IMR-90 (cell line): ENCODE measurements at regions of chr11 and their contacts with region 1.

Region 1: GRCh38 chr11:75142714-75143419 is 8.0 kb upstream of the SLCO2B1 start:
- DNase-seq: peak; percentile 95
- ATAC-seq: peak; percentile 99
- H3K4me3 ChIP-seq: no peak overlapping the region
- H3K27ac ChIP-seq: 0 out of 2 replicates have a peak overlapping the region, but pooled peaks have one; percentile 3
- H3K4me1 ChIP-seq: peaks cover 2% of the 10 kb centered on the region; the same call in 1 of the 2 replicates
- H3K27me3 ChIP-seq: peaks cover 21% of the 10 kb centered on the region
- CTCF ChIP-seq: no peak
- POLR2A ChIP-seq: no peak
- RAD21 ChIP-seq: no peak

Region 2: DNA sequence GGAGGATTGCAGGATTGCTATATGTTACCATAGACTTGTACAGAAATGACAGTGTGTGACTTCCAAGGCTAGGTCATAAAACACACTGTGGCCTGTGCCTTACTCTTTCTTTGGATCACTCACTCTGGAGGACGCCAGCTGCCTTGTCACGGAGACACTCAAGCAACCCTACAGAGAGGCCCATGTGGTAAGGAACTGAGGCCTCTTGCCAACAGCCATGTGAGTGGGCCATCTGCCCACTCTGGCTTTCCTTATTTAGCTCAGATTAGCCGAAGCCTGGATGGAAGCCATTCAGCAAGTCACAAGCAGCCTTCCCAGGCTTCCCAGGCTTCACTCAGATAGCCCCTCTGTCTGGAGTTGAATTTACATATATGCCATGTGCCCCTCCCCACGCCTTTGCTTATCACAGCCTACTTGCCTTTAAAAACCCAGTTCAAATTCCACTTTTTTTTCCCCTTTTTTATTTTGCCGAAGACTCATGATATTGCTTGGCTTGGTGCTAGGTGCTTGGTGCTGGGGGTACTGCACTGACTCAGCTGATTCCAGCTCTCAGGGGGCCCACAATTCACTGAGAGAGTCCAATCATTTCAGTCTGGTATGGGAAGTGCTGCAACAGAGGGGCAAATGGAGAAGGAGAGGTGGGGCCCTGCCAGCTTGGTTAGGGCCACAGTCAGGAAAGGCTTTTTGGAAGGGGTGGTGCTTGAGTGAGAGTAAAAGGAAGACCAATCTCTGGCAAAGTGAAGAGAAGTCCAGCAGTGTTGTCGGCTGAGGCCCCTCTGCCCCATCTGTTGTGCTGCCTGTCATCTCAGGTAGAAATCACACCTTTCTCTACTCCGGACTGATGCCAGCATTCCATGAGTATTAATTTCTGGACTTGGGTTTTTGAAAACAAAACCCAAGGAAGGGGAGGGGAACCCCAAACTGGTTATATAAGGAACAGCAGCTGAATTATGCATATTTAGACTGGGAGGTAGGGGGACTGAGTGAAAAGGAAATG is 816.9 kb before region 1 on chr11:
- CTCF ChIA-PET with region 1: no interaction called
- POLR2A ChIA-PET with region 1: no interaction called
- dilution Hi-C with region 1: no loop called
- in situ Hi-C with region 1: no loop called
- intact Hi-C with region 1: no loop called
- DNase-seq: peak; percentile 94
- ATAC-seq: peak; percentile 68
- H3K4me3 ChIP-seq: no peak overlapping the region
- H3K27ac ChIP-seq: peak overlapping the region; percentile 6; the same call in 1 of the 2 replicates
- H3K4me1 ChIP-seq: peaks cover 20% of the 10 kb centered on the region
- H3K27me3 ChIP-seq: no peaks in the 10 kb centered on the region
- CTCF ChIP-seq: no peak
- POLR2A ChIP-seq: no peak
- RAD21 ChIP-seq: no peak

Region 3: GRCh38 chr11:74602637-74603556 is 540.0 kb before region 1 on chr11:
- CTCF ChIA-PET with region 1: no interaction called
- POLR2A ChIA-PET with region 1: no interaction called
- dilution Hi-C with region 1: no loop called
- in situ Hi-C with region 1: no loop called
- intact Hi-C with region 1: no loop called
- DNase-seq: no peak
- ATAC-seq: no peak
- H3K4me3 ChIP-seq: no peak overlapping the region
- H3K27ac ChIP-seq: no peak overlapping the region
- H3K4me1 ChIP-seq: no peaks in the 10 kb centered on the region
- H3K27me3 ChIP-seq: no peaks in the 10 kb centered on the region
- CTCF ChIP-seq: no peak
- POLR2A ChIP-seq: no peak
- RAD21 ChIP-seq: no peak

Region 4: DNA sequence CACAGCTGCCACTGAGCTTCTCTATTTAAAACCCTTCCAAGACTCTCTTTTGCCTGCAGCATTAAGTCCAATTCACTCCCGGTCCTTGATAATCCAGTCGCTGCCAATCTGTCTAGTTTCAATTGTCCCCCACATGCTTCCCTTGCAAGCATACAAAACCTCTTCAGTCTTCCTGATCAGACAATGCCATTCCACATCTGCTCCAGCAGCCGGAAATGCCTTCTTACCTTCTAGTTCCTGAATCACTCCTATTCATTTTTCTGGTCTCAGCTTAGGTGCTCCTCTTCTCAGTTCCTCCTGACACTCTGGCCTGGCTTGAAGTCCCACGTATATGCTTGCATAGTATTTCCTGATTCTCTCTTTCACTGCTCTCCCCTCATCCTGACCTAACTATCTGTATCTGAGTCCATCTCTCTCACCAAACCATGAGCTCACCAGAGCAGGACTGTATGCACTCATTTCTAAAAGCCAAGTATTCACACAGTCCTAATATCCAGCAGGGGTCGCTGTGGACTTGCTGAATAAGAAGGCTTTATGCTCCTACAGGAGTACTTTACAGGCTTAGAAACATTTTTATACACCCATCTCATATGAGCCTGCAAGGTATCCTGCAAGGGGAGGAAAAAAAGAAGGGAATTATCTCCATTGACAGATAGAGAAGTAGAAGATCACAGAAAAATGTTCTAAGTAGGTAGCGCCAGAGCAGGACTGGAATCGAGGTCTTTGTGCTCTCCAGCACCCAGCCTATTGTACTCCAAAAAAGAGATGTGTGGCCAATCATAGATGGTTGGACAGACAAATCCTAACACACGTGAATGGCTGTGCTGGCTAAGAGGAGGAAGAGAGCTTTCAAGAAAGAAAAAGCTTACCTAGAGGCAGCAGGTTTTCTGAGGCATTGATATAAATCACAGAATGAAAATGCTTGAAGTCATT is 213.2 kb before region 1 on chr11:
- CTCF ChIA-PET with region 1: no interaction called
- POLR2A ChIA-PET with region 1: no interaction called
- dilution Hi-C with region 1: no loop called
- in situ Hi-C with region 1: no loop called
- intact Hi-C with region 1: loop called (anchors 2 kb)
- DNase-seq: peak; percentile 95
- ATAC-seq: peak; percentile 81
- H3K4me3 ChIP-seq: no peak overlapping the region
- H3K27ac ChIP-seq: no peak overlapping the region
- H3K4me1 ChIP-seq: peaks cover 14% of the 10 kb centered on the region
- H3K27me3 ChIP-seq: no peaks in the 10 kb centered on the region
- CTCF ChIP-seq: peak; percentile 93
- POLR2A ChIP-seq: no peak
- RAD21 ChIP-seq: peak; percentile 92

Region 5: GRCh38 chr11:75022759-75023396 is 120.0 kb before region 1 on chr11:
- CTCF ChIA-PET with region 1: interaction called, 9 read pairs
- POLR2A ChIA-PET with region 1: no interaction called
- dilution Hi-C with region 1: no loop called
- in situ Hi-C with region 1: no loop called
- intact Hi-C with region 1: loop called (anchors 2 kb)
- DNase-seq: peak; percentile 84
- ATAC-seq: peak; percentile 99
- H3K4me3 ChIP-seq: no peak overlapping the region
- H3K27ac ChIP-seq: no peak overlapping the region
- H3K4me1 ChIP-seq: no peaks in the 10 kb centered on the region
- H3K27me3 ChIP-seq: peaks cover 3% of the 10 kb centered on the region
- CTCF ChIP-seq: peak; percentile 99
- POLR2A ChIP-seq: no peak
- RAD21 ChIP-seq: peak; percentile 98

Region 6: GRCh38 chr11:75087319-75088305 is 55.3 kb before region 1 on chr11:
- CTCF ChIA-PET with region 1: no interaction called
- POLR2A ChIA-PET with region 1: interaction called, 15 read pairs
- dilution Hi-C with region 1: no loop called
- in situ Hi-C with region 1: no loop called
- intact Hi-C with region 1: no loop called
- DNase-seq: no peak
- ATAC-seq: no peak
- H3K4me3 ChIP-seq: no peak overlapping the region
- H3K27ac ChIP-seq: no peak overlapping the region
- H3K4me1 ChIP-seq: no peaks in the 10 kb centered on the region
- H3K27me3 ChIP-seq: peaks cover 15% of the 10 kb centered on the region
- CTCF ChIP-seq: no peak
- POLR2A ChIP-seq: no peak
- RAD21 ChIP-seq: no peak

Region 7: DNA sequence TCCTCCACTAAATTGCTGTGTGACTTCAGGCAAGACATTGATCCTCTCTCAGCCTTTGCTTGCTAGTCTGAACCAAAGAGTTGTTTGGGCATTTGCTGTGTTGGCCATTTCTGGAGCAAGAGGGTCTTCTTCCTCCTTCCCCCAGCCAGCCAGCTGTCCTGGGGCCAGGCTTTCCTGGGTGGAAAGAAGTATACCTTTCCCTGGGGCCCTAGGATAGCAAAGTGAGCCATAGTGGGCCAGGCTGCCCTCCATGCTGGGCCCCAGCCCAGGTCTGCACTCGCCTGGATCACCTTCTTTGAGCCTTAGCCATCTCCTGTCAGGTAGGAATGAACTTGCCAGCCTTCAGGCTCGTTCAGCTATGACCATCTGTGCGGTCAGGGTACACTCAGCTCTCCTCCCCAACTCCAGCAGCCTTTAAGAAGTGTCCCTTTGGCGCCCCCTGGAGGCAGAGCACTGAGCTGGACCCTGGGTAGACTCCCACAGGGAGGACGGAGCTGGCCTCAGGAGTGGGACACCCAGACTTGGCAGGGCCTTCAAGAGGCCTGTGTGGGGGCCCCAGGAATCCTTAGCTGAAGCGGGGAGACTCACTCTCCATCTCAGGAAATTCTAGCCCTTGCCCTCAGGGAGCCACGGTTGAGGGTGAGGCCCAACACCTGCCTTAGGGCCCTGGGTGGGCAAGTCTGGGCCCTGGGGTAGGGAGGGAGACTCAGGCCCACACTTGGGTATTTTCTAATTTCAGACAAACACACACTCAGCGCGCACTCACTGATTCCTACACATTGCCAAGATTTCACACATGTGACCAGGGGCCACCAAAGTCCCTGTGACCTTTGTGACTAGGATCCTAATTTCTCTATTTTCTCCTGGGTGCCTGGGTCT is 62.1 kb after region 1 on chr11:
- CTCF ChIA-PET with region 1: interaction called, 43 read pairs
- POLR2A ChIA-PET with region 1: interaction called, 3 read pairs
- dilution Hi-C with region 1: no loop called
- in situ Hi-C with region 1: loop called (anchors 5 kb)
- intact Hi-C with region 1: loop called (anchors 1 kb)
- DNase-seq: peak; percentile 77
- ATAC-seq: peak; percentile 100
- H3K4me3 ChIP-seq: no peak overlapping the region
- H3K27ac ChIP-seq: no peak overlapping the region
- H3K4me1 ChIP-seq: no peaks in the 10 kb centered on the region
- H3K27me3 ChIP-seq: peaks cover 50% of the 10 kb centered on the region
- CTCF ChIP-seq: peak; percentile 87
- POLR2A ChIP-seq: no peak
- RAD21 ChIP-seq: peak; percentile 85

Region 8: DNA sequence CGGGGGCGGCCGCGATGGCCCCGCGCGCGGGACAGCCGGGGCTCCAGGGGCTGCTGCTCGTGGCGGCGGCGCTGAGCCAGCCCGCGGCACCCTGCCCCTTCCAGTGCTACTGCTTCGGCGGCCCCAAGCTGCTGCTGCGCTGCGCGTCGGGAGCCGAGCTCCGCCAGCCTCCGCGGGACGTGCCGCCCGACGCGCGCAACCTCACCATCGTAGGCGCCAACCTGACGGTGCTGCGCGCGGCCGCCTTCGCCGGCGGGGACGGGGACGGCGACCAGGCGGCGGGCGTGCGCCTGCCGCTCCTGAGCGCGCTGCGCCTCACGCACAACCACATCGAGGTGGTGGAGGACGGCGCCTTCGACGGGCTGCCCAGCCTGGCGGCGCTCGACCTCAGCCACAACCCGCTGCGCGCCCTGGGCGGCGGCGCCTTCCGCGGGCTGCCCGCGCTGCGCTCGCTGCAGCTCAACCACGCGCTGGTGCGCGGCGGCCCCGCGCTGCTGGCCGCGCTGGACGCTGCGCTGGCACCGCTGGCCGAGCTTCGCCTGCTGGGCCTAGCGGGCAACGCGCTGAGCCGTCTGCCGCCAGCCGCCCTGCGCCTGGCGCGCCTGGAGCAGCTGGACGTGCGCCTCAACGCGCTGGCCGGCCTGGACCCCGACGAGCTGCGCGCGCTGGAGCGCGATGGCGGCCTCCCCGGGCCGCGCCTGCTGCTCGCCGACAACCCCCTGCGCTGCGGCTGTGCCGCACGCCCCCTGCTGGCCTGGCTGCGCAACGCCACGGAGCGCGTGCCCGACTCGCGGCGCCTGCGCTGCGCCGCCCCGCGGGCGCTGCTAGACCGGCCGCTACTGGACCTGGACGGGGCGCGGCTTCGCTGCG is 98.4 kb after region 1 on chr11:
- CTCF ChIA-PET with region 1: interaction called, 7 read pairs
- POLR2A ChIA-PET with region 1: no interaction called
- dilution Hi-C with region 1: no loop called
- in situ Hi-C with region 1: loop called (anchors 5 kb)
- intact Hi-C with region 1: loop called (anchors 2 kb)
- DNase-seq: peak; percentile 80
- ATAC-seq: peak; percentile 99
- H3K4me3 ChIP-seq: peak overlapping the region; percentile 51
- H3K27ac ChIP-seq: no peak overlapping the region
- H3K4me1 ChIP-seq: no peaks in the 10 kb centered on the region
- H3K27me3 ChIP-seq: peaks cover 88% of the 10 kb centered on the region
- CTCF ChIP-seq: peak; percentile 99
- POLR2A ChIP-seq: no peak
- RAD21 ChIP-seq: peak; percentile 66

Region 9: GRCh38 chr11:75248690-75249268 is 105.9 kb after region 1 on chr11:
- CTCF ChIA-PET with region 1: interaction called, 12 read pairs
- POLR2A ChIA-PET with region 1: no interaction called
- dilution Hi-C with region 1: no loop called
- in situ Hi-C with region 1: loop called (anchors 5 kb)
- intact Hi-C with region 1: loop called (anchors 1 kb)
- DNase-seq: peak; percentile 87
- ATAC-seq: peak; percentile 99
- H3K4me3 ChIP-seq: no peak overlapping the region
- H3K27ac ChIP-seq: no peak overlapping the region
- H3K4me1 ChIP-seq: no peaks in the 10 kb centered on the region
- H3K27me3 ChIP-seq: peaks cover 38% of the 10 kb centered on the region
- CTCF ChIP-seq: peak; percentile 100
- POLR2A ChIP-seq: no peak
- RAD21 ChIP-seq: peak; percentile 98